ENCODE measurements at regions of chrX and their contacts with region 1.

Region 1: DNA sequence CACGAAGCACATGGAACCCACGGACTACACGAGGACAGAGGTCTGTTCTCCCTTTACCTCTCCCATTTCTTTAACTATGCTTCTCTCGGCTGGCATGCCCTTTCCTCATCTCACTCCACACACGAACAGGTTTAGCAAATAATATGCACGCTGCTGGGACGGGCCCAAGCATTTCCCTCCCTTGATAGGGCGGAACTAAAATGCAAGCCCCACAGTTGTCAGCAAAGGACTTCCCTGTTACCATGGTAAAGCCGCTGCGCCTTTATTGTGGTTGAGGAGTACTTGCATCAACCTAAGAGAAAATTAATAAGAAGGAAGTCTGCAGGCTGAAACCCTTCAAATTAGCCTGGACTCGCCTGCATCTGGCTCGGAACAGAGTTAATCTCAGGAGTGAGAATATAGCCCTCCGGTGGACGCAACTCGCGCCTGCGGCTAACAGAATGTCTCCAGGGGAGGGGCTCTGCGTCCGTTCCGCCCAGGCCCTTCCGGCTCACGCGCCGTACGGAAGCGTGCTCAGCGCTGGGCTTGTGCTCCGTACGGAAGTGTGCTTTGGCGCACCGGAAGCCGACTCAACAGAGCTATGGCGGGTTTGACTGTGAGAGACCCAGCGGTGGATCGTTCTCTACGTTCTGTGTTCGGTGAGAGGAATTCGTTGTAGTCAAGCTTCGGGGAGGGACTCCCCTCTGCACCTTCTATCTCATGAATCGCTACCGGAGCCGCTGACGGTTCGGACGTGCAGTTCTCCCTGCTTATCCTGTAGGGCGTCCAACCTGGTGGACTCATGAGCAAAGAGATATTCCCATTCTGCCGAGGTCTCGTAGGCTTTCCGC is at the start of gene CSTF2:
- DNase-seq: peak; percentile 88
- ATAC-seq: peak; percentile 95
- H3K4me3 ChIP-seq: peak within 1 kb of the TSS; percentile 64 to 81 (median 72)
- H3K4me3 Mint-ChIP-seq: peak within 1 kb of the TSS; percentile 88
- H3K27ac ChIP-seq: peak within 1 kb of the TSS; percentile 76 to 89
- H3K27ac Mint-ChIP-seq: peak within 1 kb of the TSS; percentile 81
- H3K4me1 ChIP-seq: peaks cover 0 to 8% of the 10 kb centered on the region in 2 donors
- H3K4me1 Mint-ChIP-seq: peaks cover 10% of the 10 kb centered on the region
- H3K27me3 ChIP-seq: peaks cover 0 to 2% (median 0%) of the 10 kb centered on the region in 4 experiments
- H3K27me3 Mint-ChIP-seq: peaks cover 12% of the 10 kb centered on the region
- CTCF ChIP-seq: no peak
- total RNA-seq, gene CSTF2: 14.6 and 16.4 TPM in 2 replicates

Region 2: GRCh38 chrX:100928660-100929613 is 108.9 kb after region 1 on chrX and contains the start of gene XKRX:
- CTCF ChIA-PET with region 1: no interaction called
- POLR2A ChIA-PET with region 1: no interaction called
- intact Hi-C with region 1: loop called (anchors 10 kb)
- DNase-seq: peak; percentile 66
- ATAC-seq: peak; percentile 74
- H3K4me3 ChIP-seq: peak within 1 kb of the TSS in 4 of 5 experiments; percentile 58 to 68 (median 62)
- H3K4me3 Mint-ChIP-seq: peak within 1 kb of the TSS; percentile 95
- H3K27ac ChIP-seq: peak within 1 kb of the TSS; percentile 61 to 67
- H3K27ac Mint-ChIP-seq: peak within 1 kb of the TSS; percentile 93
- H3K4me1 ChIP-seq: peaks cover 18 to 50% of the 10 kb centered on the region in 2 donors
- H3K4me1 Mint-ChIP-seq: peaks cover 58% of the 10 kb centered on the region
- H3K27me3 ChIP-seq: no peaks in the 10 kb centered on the region
- H3K27me3 Mint-ChIP-seq: no peaks in the 10 kb centered on the region
- CTCF ChIP-seq: no peak
- total RNA-seq, gene XKRX: 4.9 and 5.4 TPM in 2 replicates

Region 3: GRCh38 chrX:100994352-100995281 is 174.6 kb after region 1 on chrX:
- CTCF ChIA-PET with region 1: no interaction called
- POLR2A ChIA-PET with region 1: no interaction called
- intact Hi-C with region 1: no loop called
- DNase-seq: no peak
- ATAC-seq: no peak
- H3K4me3 ChIP-seq: no peak overlapping the region
- H3K4me3 Mint-ChIP-seq: no peak overlapping the region
- H3K27ac ChIP-seq: no peak overlapping the region
- H3K27ac Mint-ChIP-seq: no peak overlapping the region
- H3K4me1 ChIP-seq: peaks cover 0 to 2% of the 10 kb centered on the region in 2 donors
- H3K4me1 Mint-ChIP-seq: peaks cover 4% of the 10 kb centered on the region
- H3K27me3 ChIP-seq: no peaks in the 10 kb centered on the region
- H3K27me3 Mint-ChIP-seq: no peaks in the 10 kb centered on the region
- CTCF ChIP-seq: no peak

Region 4: DNA sequence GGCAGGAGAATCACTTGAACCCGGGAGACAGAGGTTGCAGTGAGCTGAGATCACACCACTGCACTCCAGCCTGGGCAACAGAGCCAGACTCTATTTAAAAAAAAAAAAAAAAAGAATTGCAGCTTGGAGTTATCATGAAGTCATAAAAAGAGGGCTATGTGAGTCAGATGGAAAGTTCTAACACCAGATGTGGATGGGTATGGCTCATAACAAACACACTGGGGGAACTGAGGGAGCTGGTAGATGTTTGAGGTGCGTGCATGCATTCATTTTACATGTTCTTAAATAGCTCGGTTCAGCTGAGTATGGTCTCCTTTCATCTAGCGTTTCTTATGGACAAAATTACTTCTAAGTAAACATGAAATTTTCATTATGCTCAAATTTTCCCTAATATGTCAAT is 220.1 kb after region 1 on chrX:
- CTCF ChIA-PET with region 1: no interaction called
- POLR2A ChIA-PET with region 1: no interaction called
- intact Hi-C with region 1: no loop called
- DNase-seq: no peak
- ATAC-seq: no peak
- H3K4me3 ChIP-seq: no peak overlapping the region
- H3K4me3 Mint-ChIP-seq: no peak overlapping the region
- H3K27ac ChIP-seq: no peak overlapping the region
- H3K27ac Mint-ChIP-seq: no peak overlapping the region
- H3K4me1 ChIP-seq: no peaks in the 10 kb centered on the region
- H3K4me1 Mint-ChIP-seq: no peaks in the 10 kb centered on the region
- H3K27me3 ChIP-seq: no peaks in the 10 kb centered on the region
- H3K27me3 Mint-ChIP-seq: no peaks in the 10 kb centered on the region
- CTCF ChIP-seq: no peak

Region 5: DNA sequence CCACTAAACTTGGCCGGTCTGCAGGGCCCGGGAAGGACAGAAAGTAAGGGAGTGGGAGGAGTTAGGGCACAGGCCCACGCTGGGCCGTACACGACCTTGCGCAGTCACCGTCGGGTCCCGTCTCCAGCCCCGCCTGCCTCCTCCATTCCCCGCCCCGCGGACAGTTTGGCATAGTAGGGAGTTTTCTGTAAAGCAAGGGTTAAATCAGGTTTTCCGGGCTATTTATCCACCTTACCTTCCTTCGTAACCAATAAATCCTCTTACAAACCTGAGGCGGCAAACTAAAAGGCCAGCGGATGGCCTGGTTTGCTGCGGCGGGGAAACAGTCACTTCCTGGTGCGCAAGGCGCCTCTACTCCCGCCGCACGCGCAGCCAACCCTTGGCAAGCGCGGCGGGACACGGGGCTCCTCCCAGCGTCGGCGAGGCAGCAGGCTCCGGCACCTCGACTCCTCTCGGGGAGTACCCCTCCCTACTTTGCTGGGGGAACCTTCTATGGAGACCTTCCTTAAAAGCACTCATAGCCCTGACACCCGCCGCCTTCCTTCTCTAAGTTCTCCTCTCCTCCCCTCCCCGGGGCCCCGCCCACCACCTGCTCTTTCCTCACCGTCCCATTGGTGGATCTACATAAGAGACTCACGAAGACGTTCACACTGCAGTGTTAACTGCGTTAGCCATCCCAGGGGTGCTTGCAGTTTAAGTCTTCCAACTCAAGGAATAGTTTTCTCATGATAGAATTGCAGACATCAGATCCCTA is 231.7 kb after region 1 on chrX and contains the start of gene TRMT2B:
- CTCF ChIA-PET with region 1: no interaction called
- POLR2A ChIA-PET with region 1: no interaction called
- intact Hi-C with region 1: loop called (anchors 1 kb)
- DNase-seq: peak; percentile 85
- ATAC-seq: peak; percentile 83
- H3K4me3 ChIP-seq: peak within 1 kb of the TSS; percentile 56 to 85 (median 76)
- H3K4me3 Mint-ChIP-seq: peak within 1 kb of the TSS; percentile 86
- H3K27ac ChIP-seq: peak within 1 kb of the TSS; percentile 59 to 86
- H3K27ac Mint-ChIP-seq: peak within 1 kb of the TSS; percentile 93
- H3K4me1 ChIP-seq: peaks cover 7 to 13% of the 10 kb centered on the region in 2 donors
- H3K4me1 Mint-ChIP-seq: peaks cover 25% of the 10 kb centered on the region
- H3K27me3 ChIP-seq: no peaks in the 10 kb centered on the region
- H3K27me3 Mint-ChIP-seq: no peaks in the 10 kb centered on the region
- CTCF ChIP-seq: no peak
- total RNA-seq, gene TRMT2B: 51.2 and 56.4 TPM in 2 replicates

Region 6: GRCh38 chrX:101097546-101098453 is 277.7 kb after region 1 on chrX and contains the start of gene CENPI:
- CTCF ChIA-PET with region 1: no interaction called
- POLR2A ChIA-PET with region 1: no interaction called
- intact Hi-C with region 1: loop called (anchors 1 kb)
- DNase-seq: peak; percentile 94
- ATAC-seq: peak; percentile 100
- H3K4me3 ChIP-seq: peak within 1 kb of the TSS; percentile 51 to 82 (median 67)
- H3K4me3 Mint-ChIP-seq: peak within 1 kb of the TSS; percentile 95
- H3K27ac ChIP-seq: peak within 1 kb of the TSS; percentile 70 to 91
- H3K27ac Mint-ChIP-seq: peak within 1 kb of the TSS; percentile 92
- H3K4me1 ChIP-seq: peaks cover 0 to 10% of the 10 kb centered on the region in 2 donors
- H3K4me1 Mint-ChIP-seq: peaks cover 12% of the 10 kb centered on the region
- H3K27me3 ChIP-seq: no peaks in the 10 kb centered on the region
- H3K27me3 Mint-ChIP-seq: no peaks in the 10 kb centered on the region
- CTCF ChIP-seq: no peak
- total RNA-seq, gene CENPI: 1.9 and 3.2 TPM in 2 replicates

Region 7: GRCh38 chrX:102515975-102516941 is 1696.2 kb after region 1 on chrX and contains the start of gene TMSB15A:
- CTCF ChIA-PET with region 1: no interaction called
- POLR2A ChIA-PET with region 1: no interaction called
- intact Hi-C with region 1: no loop called
- DNase-seq: peak; percentile 39
- ATAC-seq: peak; percentile 66
- H3K4me3 ChIP-seq: peak within 1 kb of the TSS in 4 of 5 experiments; percentile 4 to 45 (median 32)
- H3K4me3 Mint-ChIP-seq: peak within 1 kb of the TSS; percentile 85
- H3K27ac ChIP-seq: no peak within 1 kb of the TSS
- H3K27ac Mint-ChIP-seq: no peak within 1 kb of the TSS
- H3K4me1 ChIP-seq: peaks cover 0 to 6% of the 10 kb centered on the region in 2 donors
- H3K4me1 Mint-ChIP-seq: peaks cover 11% of the 10 kb centered on the region
- H3K27me3 ChIP-seq: peaks cover 0 to 13% (median 8%) of the 10 kb centered on the region in 4 experiments
- H3K27me3 Mint-ChIP-seq: peaks cover 31% of the 10 kb centered on the region
- CTCF ChIP-seq: no peak
- total RNA-seq, gene TMSB15A: not detected in 2 replicates